HepG2 (cell line): ENCODE measurements at regions of chr14 and their contacts with region 1.

Region 1: GRCh38 chr14:22556990-22557623 is 31.9 kb downstream of the DAD1 start:
- DNase-seq: peak; percentile 74
- ATAC-seq: peak; percentile 70
- H3K4me3 ChIP-seq: peak overlapping the region; percentile 27 to 66 (median 28); a peak in 4 of 6 replicates
- H3K27ac ChIP-seq: no peak overlapping the region
- H3K4me1 ChIP-seq: peaks cover 63% of the 10 kb centered on the region
- H3K27me3 ChIP-seq: peaks cover 9 to 42% of the 10 kb centered on the region in 2 experiments; a peak in 4 of 5 replicates
- CTCF ChIP-seq: peak; percentile 98
- EP300 ChIP-seq: peak in 1 of 2 experiments; percentile 51; a peak in 1 of 4 replicates
- POLR2A ChIP-seq: no peak
- RAD21 ChIP-seq: peak; percentile 100

Region 2: DNA sequence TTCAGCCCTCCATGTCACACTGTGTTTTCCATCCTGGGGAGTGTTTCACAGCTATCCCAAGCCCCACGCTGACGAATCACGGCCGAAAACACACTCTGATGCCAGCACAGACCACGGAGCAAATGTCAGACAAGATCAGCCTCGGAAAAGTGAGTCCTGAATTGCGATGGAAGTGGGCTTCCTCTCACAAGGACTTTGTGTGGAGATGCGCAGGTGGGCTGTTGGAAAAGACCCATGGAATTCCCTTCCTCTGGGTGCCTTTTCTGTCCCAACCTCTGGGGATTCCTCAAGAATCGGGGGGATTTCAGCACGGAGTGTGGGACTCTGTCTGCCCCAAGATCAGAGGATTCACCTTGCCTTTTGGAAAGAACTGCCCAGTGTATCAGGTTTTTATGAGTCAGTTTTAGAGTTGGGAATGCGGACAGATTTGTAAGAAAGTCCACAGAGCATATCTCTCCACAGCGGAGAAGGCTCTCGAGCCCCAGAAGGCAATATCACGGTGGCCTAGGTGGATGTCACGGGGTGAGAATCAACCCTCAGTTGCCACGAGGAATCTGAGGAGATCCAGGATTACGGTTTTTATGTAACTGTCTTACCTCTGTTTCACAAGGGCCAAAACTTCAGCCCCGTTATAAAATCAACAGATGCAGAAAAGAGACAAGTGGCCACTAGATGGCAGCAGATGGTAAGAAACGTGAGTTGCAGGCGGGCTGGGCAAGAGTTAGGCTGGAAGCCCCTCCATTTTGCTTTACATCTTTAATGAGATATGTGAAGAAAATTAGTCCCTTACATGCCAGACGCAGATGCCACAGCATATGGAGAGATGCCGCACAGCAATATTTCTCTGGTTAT is 170.0 kb before region 1 on chr14:
- CTCF ChIA-PET with region 1: interaction called, 7 read pairs
- POLR2A ChIA-PET with region 1: no interaction called
- in situ Hi-C with region 1: no loop called
- intact Hi-C with region 1: loop called (anchors 2 kb)
- DNase-seq: peak; percentile 88
- ATAC-seq: peak; percentile 77
- H3K4me3 ChIP-seq: no peak overlapping the region
- H3K27ac ChIP-seq: no peak overlapping the region
- H3K4me1 ChIP-seq: no peaks in the 10 kb centered on the region
- H3K27me3 ChIP-seq: peaks cover 0 to 10% of the 10 kb centered on the region in 2 experiments; a peak in 2 of 5 replicates
- CTCF ChIP-seq: peak; percentile 97
- EP300 ChIP-seq: no peak
- POLR2A ChIP-seq: no peak
- RAD21 ChIP-seq: peak; percentile 84

Region 3: GRCh38 chr14:22644305-22644635 is 87.2 kb after region 1 on chr14 and contains the start of gene OR6J1:
- CTCF ChIA-PET with region 1: interaction called, 175 read pairs
- POLR2A ChIA-PET with region 1: no interaction called
- in situ Hi-C with region 1: no loop called
- intact Hi-C with region 1: loop called (anchors 2 kb)
- DNase-seq: no peak
- ATAC-seq: peak; percentile 66
- H3K4me3 ChIP-seq: no peak within 1 kb of the TSS
- H3K27ac ChIP-seq: no peak within 1 kb of the TSS
- H3K4me1 ChIP-seq: peaks cover 14% of the 10 kb centered on the region
- H3K27me3 ChIP-seq: peaks cover 0 to 3% of the 10 kb centered on the region in 2 experiments; a peak in 3 of 5 replicates
- CTCF ChIP-seq: no peak
- EP300 ChIP-seq: no peak
- POLR2A ChIP-seq: no peak
- RAD21 ChIP-seq: no peak
- total RNA-seq, gene OR6J1: not detected in 2 replicates

Region 4: DNA sequence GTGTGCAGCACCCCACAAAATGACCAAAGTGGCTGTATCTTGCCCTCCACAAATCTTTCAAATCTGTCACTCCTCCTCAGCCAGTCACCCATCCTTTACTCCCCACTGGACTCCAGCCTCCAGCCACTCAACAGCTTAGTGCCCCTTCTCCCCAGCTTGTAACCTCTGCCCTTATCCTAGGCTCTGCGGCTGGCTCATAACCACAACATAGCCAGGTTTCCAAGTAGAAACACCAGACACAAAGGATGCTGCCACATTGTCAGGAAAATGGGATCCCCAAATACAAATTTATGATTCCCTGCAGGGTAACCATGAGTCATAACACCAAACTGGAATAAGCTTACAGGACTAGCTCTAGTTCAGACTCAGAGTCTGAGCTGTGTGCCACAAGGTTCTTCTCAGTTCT is 224.5 kb after region 1 on chr14:
- CTCF ChIA-PET with region 1: interaction called, 16 read pairs
- POLR2A ChIA-PET with region 1: no interaction called
- in situ Hi-C with region 1: no loop called
- intact Hi-C with region 1: no loop called
- DNase-seq: no peak
- ATAC-seq: no peak
- H3K4me3 ChIP-seq: no peak overlapping the region
- H3K27ac ChIP-seq: no peak overlapping the region
- H3K4me1 ChIP-seq: peaks cover 7% of the 10 kb centered on the region; the same call in 1 of the 2 replicates
- H3K27me3 ChIP-seq: no peaks in the 10 kb centered on the region
- CTCF ChIP-seq: no peak
- EP300 ChIP-seq: no peak
- POLR2A ChIP-seq: no peak
- RAD21 ChIP-seq: no peak

Region 5: GRCh38 chr14:22852940-22853767 is 296.0 kb after region 1 on chr14:
- CTCF ChIA-PET with region 1: interaction called, 200 read pairs
- POLR2A ChIA-PET with region 1: no interaction called
- in situ Hi-C with region 1: loop called (anchors 5 kb)
- intact Hi-C with region 1: loop called (anchors 1 kb)
- DNase-seq: peak; percentile 86
- ATAC-seq: peak; percentile 88
- H3K4me3 ChIP-seq: peak overlapping the region; percentile 43 to 80 (median 57)
- H3K27ac ChIP-seq: no peak overlapping the region
- H3K4me1 ChIP-seq: peaks cover 42% of the 10 kb centered on the region
- H3K27me3 ChIP-seq: peaks cover 7 to 30% of the 10 kb centered on the region in 2 experiments; a peak in 4 of 5 replicates
- CTCF ChIP-seq: peak; percentile 98
- EP300 ChIP-seq: no peak
- POLR2A ChIP-seq: no peak
- RAD21 ChIP-seq: peak; percentile 100

Region 6: GRCh38 chr14:22986508-22987054 is 429.5 kb after region 1 on chr14:
- CTCF ChIA-PET with region 1: interaction called, 42 read pairs
- POLR2A ChIA-PET with region 1: no interaction called
- in situ Hi-C with region 1: no loop called
- intact Hi-C with region 1: loop called (anchors 1 kb)
- DNase-seq: peak; percentile 93
- ATAC-seq: peak; percentile 56
- H3K4me3 ChIP-seq: no peak overlapping the region
- H3K27ac ChIP-seq: no peak overlapping the region
- H3K4me1 ChIP-seq: peaks cover 37% of the 10 kb centered on the region
- H3K27me3 ChIP-seq: no peaks in the 10 kb centered on the region; a peak in 1 of 5 replicates
- CTCF ChIP-seq: no peak
- EP300 ChIP-seq: 0 out of 4 replicates have a peak, but pooled peaks of 1 of the 2 experiments have one; percentile 14
- POLR2A ChIP-seq: no peak
- RAD21 ChIP-seq: peak; percentile 96

Region 7: DNA sequence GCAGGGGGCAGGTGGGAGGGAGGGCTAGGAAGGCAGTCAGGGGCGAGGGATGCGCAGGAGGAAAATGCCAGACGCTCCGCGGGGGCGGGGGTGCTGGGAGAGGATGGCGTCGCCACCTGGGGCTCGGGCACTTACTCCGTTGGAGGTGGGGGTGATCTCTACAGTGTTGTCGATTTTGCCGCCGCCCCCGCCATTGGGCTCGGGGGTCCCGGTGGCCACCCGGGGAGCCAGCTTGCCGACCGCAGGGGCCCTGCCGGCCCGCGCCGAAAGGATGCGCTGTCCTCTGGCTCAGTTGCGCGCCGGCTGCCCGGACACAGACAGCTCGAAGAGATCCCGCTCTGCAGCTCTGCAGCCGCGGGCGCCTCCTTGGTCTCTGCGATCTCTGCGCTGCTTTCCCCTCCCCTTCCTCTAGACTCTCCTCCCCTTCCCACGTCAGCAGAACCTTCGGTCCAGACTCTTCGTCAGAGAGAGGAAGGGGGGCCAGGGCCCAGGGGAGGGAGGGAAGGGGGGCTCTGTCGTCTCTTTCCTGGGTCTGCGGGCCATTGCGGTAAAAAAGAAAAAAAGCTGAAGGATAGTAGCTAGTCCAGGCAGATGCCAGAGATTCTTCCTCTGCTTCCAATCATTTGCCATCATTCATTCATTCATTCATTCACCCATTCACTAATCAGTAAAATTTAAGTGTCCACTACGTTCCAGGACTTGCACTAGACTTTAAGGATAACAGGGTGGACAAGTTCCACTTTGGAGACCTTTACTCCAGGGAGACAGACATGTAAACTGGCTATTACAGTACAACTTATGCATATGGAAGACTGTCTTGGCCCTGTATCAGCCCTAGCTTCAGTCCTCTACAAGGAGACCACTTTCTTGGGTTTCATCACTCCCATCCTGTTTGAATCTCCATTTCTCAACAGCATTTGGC is 795.7 kb after region 1 on chr14 and contains the start of gene SLC22A17:
- CTCF ChIA-PET with region 1: no interaction called
- POLR2A ChIA-PET with region 1: no interaction called
- in situ Hi-C with region 1: no loop called
- intact Hi-C with region 1: no loop called
- DNase-seq: peak; percentile 45
- ATAC-seq: peak; percentile 80
- H3K4me3 ChIP-seq: peak within 1 kb of the TSS; percentile 22 to 64 (median 30); a peak in 4 of 6 replicates
- H3K27ac ChIP-seq: no peak within 1 kb of the TSS
- H3K4me1 ChIP-seq: no peaks in the 10 kb centered on the region
- H3K27me3 ChIP-seq: peaks cover 29 to 91% of the 10 kb centered on the region in 2 experiments
- CTCF ChIP-seq: peak; percentile 6
- EP300 ChIP-seq: no peak
- POLR2A ChIP-seq: no peak
- RAD21 ChIP-seq: no peak
- total RNA-seq, gene SLC22A17: 0.48 and 0.95 TPM in 2 replicates